A549 (cell line): ENCODE measurements at regions of chr14 and their contacts with region 1.

Region 1: GRCh38 chr14:74618078-74618952 is 6.3 kb upstream of the LTBP2 start:
- DNase-seq: peak; percentile 48 to 80
- ATAC-seq: peak; percentile 51
- H3K4me3 ChIP-seq: no peak overlapping the region
- H3K27ac ChIP-seq: peak overlapping the region; percentile 89 to 96
- H3K4me1 ChIP-seq: peaks cover 81% of the 10 kb centered on the region
- CTCF ChIP-seq: no peak
- EP300 ChIP-seq: peak; percentile 20 to 67; a peak in 1 of 5 replicates
- POLR2A ChIP-seq: no peak
- RAD21 ChIP-seq: no peak

Region 2: DNA sequence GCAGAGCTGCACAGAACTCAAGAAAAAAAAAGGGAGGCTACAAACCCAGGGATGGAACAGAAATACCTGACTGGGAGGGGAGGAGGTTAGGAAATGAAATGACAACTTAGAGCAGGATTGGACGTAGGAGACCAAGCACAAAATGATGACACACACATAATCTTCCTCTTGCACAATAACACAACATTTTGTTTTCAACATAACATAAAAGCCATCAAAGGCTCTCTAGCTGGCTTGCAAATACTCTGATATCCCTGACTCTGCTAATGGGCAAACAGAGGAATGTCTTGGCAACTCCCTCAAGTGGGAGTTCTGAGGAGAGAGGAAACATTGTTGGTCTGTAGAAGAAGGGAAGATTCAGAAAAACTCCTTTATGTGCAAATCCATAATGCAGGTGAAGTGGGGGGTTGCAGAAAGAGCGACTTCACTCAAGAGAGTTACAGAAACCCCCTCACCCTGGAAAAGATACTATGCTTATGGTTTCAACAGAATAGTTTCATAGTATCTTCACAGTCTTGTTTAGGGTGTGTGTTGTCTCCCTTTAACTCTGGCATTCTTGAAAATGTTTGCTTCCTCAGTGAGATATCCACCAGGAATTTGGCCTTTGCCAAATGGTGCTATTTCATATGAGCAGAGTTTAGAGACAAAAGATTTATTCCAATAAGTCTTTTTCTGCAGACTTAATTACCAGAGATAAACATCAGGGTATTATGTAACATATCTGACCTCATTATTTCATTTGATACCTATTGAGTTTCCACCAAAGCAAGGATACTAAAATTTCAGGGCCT is 37.5 kb after region 1 on chr14:
- CTCF ChIA-PET with region 1: interaction called, 228 read pairs
- POLR2A ChIA-PET with region 1: interaction called, 3 read pairs
- DNase-seq: peak in 1 of 2 experiments; percentile 63
- ATAC-seq: peak; percentile 51 to 62; a peak in 5 of 6 replicates
- H3K4me3 ChIP-seq: no peak overlapping the region
- H3K27ac ChIP-seq: peak overlapping the region; percentile 56 to 76
- H3K4me1 ChIP-seq: peaks cover 66% of the 10 kb centered on the region
- CTCF ChIP-seq: no peak
- EP300 ChIP-seq: peak in 1 of 2 experiments; percentile 43; a peak in 1 of 5 replicates
- POLR2A ChIP-seq: no peak
- RAD21 ChIP-seq: no peak